ENCODE measurements at regions of chr6 and their contacts with region 1.

Region 1: DNA sequence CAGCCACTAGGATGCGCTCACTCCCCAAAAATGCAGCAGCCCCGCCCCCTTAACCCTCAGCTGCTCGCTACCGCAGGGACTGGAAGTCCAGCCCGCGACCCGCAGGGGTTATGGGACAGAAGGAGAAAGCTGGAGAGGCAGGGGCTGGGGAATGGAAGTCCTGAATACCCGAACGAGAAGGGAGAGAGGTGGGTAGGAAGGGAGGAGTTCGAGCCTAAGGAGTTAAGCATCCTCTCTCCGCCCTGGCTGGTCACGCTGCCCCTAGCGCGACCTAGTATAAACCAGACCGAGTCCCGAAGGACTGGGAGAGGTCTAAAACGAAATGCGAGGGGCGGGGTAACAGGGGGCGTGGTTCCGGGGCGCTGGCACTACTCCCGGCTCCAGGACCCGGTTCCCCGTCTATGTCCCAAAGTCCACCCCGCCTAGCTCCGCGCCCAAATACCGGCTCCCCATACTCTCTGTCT is 448 bp upstream of the DDAH2 start:
- DNase-seq: peak; percentile 90
- ATAC-seq: peak; percentile 48
- H3K4me3 ChIP-seq: peak overlapping the region; percentile 67 to 94 (median 85)
- H3K4me3 Mint-ChIP-seq: peak overlapping the region; percentile 99
- H3K27ac ChIP-seq: peak overlapping the region; percentile 78 to 82
- H3K27ac Mint-ChIP-seq: peak overlapping the region; percentile 97
- H3K4me1 ChIP-seq: peaks cover 49 to 58% of the 10 kb centered on the region in 2 donors
- H3K4me1 Mint-ChIP-seq: peaks cover 72% of the 10 kb centered on the region
- H3K27me3 ChIP-seq: no peaks in the 10 kb centered on the region
- H3K27me3 Mint-ChIP-seq: no peaks in the 10 kb centered on the region
- CTCF ChIP-seq: peak; percentile 89

Region 2: DNA sequence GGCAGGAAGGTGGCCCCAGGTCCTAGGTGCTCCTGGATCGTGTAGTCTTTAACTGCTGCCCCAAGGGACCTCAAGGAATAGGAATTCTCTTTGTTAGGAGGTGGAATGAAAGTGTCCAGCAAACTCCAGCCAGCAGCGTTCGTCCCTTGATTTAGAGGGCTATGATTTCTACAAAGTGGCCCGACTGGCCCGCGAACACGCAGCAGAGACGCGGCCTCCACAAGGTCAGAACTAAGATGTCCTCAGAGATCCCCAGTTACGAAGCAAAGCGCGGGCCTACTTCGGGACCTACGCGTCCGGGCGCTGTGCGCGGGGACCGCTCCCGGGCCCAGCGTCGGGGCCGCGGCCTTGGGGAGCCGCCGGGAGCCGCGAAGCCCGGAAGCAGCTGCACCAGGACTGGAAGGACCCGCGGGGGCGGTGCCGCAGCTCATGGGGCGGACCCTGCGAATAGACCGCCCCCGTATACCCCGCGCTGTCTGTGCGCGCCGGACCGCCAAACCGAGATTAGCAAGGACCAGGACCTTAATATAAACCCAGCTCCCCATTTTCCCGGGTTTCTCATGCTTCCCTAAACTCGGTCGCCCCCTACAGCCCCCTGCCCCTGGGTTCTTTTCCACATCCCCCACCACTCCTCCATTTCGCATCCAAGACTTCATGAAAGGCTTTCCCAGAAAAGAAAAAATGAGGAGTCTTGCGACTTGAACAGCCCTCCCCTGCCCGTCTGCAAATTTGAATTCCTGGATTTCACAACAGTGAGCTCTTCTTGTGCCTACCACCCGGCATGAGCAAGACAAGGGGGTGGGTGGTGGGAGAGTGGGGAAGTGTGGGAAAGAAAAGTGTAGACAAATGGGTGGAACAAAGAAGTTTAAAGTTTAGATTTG is 68.9 kb before region 1 on chr6 and contains the start of gene C6orf47:
- CTCF ChIA-PET with region 1: interaction called, 5 read pairs
- POLR2A ChIA-PET with region 1: no interaction called
- intact Hi-C with region 1: loop called (anchors 2 kb)
- DNase-seq: peak; percentile 83
- ATAC-seq: peak; percentile 67
- H3K4me3 ChIP-seq: peak within 1 kb of the TSS; percentile 63 to 98 (median 86)
- H3K4me3 Mint-ChIP-seq: peak within 1 kb of the TSS; percentile 94
- H3K27ac ChIP-seq: peak within 1 kb of the TSS; percentile 50 to 77
- H3K27ac Mint-ChIP-seq: peak within 1 kb of the TSS; percentile 89
- H3K4me1 ChIP-seq: peaks cover 43 to 62% of the 10 kb centered on the region in 2 donors
- H3K4me1 Mint-ChIP-seq: peaks cover 68% of the 10 kb centered on the region
- H3K27me3 ChIP-seq: no peaks in the 10 kb centered on the region
- H3K27me3 Mint-ChIP-seq: no peaks in the 10 kb centered on the region
- CTCF ChIP-seq: no peak
- total RNA-seq, gene C6orf47: 34.0 and 35.1 TPM in 2 replicates

Region 3: GRCh38 chr6:31680840-31681671 is 48.5 kb before region 1 on chr6 and contains the start of gene LY6G5C:
- CTCF ChIA-PET with region 1: interaction called, 10 read pairs
- POLR2A ChIA-PET with region 1: interaction called, 3 read pairs
- intact Hi-C with region 1: loop called (anchors 2 kb)
- DNase-seq: peak; percentile 79
- ATAC-seq: peak; percentile 78
- H3K4me3 ChIP-seq: peak within 1 kb of the TSS; percentile 44 to 69 (median 53)
- H3K4me3 Mint-ChIP-seq: peak within 1 kb of the TSS; percentile 88
- H3K27ac ChIP-seq: peak within 1 kb of the TSS in 1 of 2 donors; percentile 50
- H3K27ac Mint-ChIP-seq: peak within 1 kb of the TSS; percentile 57
- H3K4me1 ChIP-seq: peaks cover 19 to 40% of the 10 kb centered on the region in 2 donors
- H3K4me1 Mint-ChIP-seq: peaks cover 43% of the 10 kb centered on the region
- H3K27me3 ChIP-seq: no peaks in the 10 kb centered on the region
- H3K27me3 Mint-ChIP-seq: no peaks in the 10 kb centered on the region
- CTCF ChIP-seq: peak; percentile 55
- total RNA-seq, gene LY6G5C: 0.76 and 2.1 TPM in 2 replicates

Region 4: DNA sequence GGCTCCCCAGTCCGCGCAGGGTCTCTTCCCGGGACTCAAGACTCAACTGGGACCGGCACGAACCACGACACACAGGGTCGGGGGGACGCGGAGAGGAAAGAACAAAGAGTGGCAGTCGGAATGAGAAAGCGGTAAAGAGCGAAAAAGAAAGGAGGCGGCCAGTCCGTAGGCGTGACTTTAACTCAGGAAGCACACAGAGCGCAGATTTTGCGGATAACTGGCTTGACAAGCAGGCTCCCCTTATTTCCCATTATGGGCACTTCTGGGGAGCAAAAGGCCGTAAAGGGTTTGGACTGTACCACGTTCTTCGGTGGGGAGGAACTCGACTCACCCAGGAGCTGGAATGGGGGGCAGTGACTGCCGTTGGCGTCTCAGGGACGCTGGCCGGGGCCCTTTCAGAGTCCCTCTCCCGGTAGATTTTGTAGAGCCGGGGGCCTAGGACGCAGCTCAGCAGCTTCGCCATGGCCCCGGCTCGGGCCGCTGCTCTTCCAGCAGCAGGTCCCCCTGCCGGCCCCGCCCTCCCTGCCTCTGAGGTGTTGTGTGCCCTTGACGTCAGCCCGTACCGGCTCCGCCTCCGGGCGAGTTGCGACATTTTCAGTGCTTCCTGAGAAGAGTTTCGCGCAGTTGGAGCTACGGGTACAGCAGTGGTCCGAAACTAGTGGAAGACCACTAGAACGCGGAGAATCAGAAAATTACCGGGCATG is 26.6 kb before region 1 on chr6 and contains the start of gene ABHD16A:
- CTCF ChIA-PET with region 1: interaction called, 7 read pairs
- POLR2A ChIA-PET with region 1: interaction called, 16 read pairs
- intact Hi-C with region 1: loop called (anchors 1 kb)
- DNase-seq: peak; percentile 99
- ATAC-seq: peak; percentile 95
- H3K4me3 ChIP-seq: peak within 1 kb of the TSS; percentile 65 to 98 (median 96)
- H3K4me3 Mint-ChIP-seq: peak within 1 kb of the TSS; percentile 98
- H3K27ac ChIP-seq: peak within 1 kb of the TSS; percentile 87 to 93
- H3K27ac Mint-ChIP-seq: peak within 1 kb of the TSS; percentile 91
- H3K4me1 ChIP-seq: peaks cover 20 to 28% of the 10 kb centered on the region in 2 donors
- H3K4me1 Mint-ChIP-seq: peaks cover 32% of the 10 kb centered on the region
- H3K27me3 ChIP-seq: no peaks in the 10 kb centered on the region
- H3K27me3 Mint-ChIP-seq: no peaks in the 10 kb centered on the region
- CTCF ChIP-seq: no peak
- total RNA-seq, gene ABHD16A: 78.3 and 90.3 TPM in 2 replicates

Region 5: DNA sequence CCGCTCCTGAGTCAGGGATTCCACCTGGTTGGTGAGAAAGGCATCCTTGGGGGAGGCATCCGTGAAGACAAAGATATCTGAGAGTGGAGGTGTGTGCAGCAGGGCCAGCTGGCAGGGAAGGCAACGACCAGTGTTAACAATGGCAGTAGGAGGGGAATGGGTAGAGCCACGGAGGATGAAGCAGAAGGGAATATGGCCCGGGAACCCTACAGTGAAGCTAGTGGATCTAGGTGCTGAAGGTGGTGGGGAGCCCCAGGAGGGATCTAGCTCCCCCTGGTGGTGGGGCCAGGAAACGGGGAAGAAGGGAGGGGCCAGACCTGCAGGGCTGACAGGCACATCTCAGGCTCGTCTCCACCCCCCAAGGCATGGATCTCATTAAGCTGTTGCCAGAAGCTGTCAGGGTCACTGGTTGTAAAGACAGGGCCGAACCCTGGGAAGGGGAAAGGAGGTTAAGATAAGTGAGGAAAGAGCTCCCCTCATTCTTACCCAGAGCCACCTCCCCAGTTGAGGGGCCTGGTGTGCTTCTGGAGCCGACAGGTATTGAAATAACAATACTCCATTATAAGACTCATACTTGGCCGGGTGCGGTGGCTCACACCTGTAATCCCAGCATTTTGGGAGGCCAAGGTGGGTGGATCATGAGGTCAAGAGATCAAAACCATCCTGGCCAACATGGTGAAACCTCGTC is 40.3 kb after region 1 on chr6:
- CTCF ChIA-PET with region 1: interaction called, 30 read pairs
- POLR2A ChIA-PET with region 1: interaction called, 5 read pairs
- intact Hi-C with region 1: loop called (anchors 1 kb)
- DNase-seq: peak; percentile 87
- ATAC-seq: peak; percentile 98
- H3K4me3 ChIP-seq: no peak overlapping the region
- H3K4me3 Mint-ChIP-seq: no peak overlapping the region
- H3K27ac ChIP-seq: no peak overlapping the region
- H3K27ac Mint-ChIP-seq: peak overlapping the region; percentile 32
- H3K4me1 ChIP-seq: peaks cover 0 to 9% of the 10 kb centered on the region in 2 donors
- H3K4me1 Mint-ChIP-seq: peaks cover 13% of the 10 kb centered on the region
- H3K27me3 ChIP-seq: no peaks in the 10 kb centered on the region
- H3K27me3 Mint-ChIP-seq: no peaks in the 10 kb centered on the region
- CTCF ChIP-seq: peak; percentile 74

Region 6: GRCh38 chr6:31815025-31815838 is 85.7 kb after region 1 on chr6 and contains the starts of genes HSPA1A and HSPA1L:
- CTCF ChIA-PET with region 1: interaction called, 14 read pairs
- POLR2A ChIA-PET with region 1: interaction called, 28 read pairs
- intact Hi-C with region 1: no loop called
- DNase-seq: peak; percentile 74
- ATAC-seq: peak; percentile 59
- H3K4me3 ChIP-seq: peak within 1 kb of the TSS; percentile 50 to 79 (median 73)
- H3K4me3 Mint-ChIP-seq: peak within 1 kb of the TSS; percentile 96
- H3K27ac ChIP-seq: peak within 1 kb of the TSS; percentile 11 to 73
- H3K27ac Mint-ChIP-seq: peak within 1 kb of the TSS; percentile 93
- H3K4me1 ChIP-seq: peaks cover 15 to 30% of the 10 kb centered on the region in 2 donors
- H3K4me1 Mint-ChIP-seq: peaks cover 22% of the 10 kb centered on the region
- H3K27me3 ChIP-seq: no peaks in the 10 kb centered on the region
- H3K27me3 Mint-ChIP-seq: no peaks in the 10 kb centered on the region
- CTCF ChIP-seq: no peak
- total RNA-seq, gene HSPA1A: 58.8 and 61.2 TPM in 2 replicates
- total RNA-seq, gene HSPA1L: 2.0 and 2.4 TPM in 2 replicates